ENCODE measurements at regions of chr7 and their contacts with region 1.

Region 1: DNA sequence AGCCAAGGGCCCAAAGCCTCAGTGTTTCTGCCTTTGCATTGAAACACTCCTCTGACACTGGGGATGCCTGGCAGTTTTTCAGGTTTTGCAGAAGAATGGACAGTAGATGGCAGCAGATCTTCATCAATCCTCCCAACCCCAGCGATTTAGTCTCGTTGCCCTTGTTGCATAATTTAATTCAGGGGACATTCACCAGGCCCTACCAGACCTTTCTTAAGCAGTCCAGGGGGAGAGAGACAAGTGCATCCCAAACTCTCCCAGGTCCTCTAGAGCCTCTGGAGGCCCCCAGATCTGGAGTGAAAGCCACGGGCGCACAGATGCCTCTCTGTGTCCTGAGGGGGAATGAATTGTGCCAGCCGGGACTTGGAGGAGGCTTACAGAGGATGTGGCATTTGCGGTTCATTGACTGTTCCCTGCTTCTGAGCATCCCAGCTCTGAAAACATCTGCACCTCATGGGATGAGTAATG is 29.6 kb downstream of the MINDY4 start:
- DNase-seq: peak; percentile 62 to 63
- H3K4me3 ChIP-seq: no peak overlapping the region
- H3K27ac ChIP-seq: peak overlapping the region in 1 of 3 donors; percentile 41
- H3K4me1 ChIP-seq: peaks cover 17 to 53% of the 10 kb centered on the region in 2 donors
- H3K27me3 ChIP-seq: no peaks in the 10 kb centered on the region
- CTCF ChIP-seq: peak; percentile 19 to 86 (median 70)
- POLR2A ChIP-seq: no peak

Region 2: DNA sequence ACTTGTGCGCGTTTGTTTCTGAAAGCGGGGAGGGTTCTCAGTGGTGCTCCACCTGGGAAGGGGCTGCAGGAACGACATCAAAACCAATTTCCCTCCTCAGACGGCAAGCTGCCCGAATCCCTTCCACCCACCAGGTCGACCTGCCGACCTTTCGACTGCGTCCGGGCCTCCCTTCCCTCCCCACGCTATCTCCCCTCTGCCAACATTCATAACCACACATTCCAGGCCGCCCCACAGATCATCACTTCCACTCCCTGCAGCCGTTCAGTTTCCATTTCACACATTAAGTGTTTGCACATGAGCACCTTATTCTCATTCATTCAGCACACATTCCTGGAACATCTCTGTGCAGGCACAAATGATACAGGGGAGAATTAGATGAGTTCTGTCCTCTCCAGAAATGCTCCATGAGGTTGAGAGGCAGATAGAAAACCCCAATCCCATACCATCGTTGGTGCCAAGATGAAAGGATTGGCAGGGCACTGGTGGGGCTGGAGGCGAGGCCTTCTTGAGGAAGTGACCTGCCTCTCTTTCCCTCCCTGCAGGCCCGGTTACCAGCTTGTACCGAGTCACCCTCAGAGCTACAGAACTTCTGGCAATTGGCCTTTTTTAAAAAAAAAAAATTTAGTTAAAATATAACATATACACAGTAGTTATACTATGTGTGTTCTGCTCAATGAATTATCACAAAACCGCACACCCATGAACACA is 40.4 kb after region 1 on chr7:
- intact Hi-C with region 1: no loop called
- DNase-seq: no peak
- H3K4me3 ChIP-seq: no peak overlapping the region
- H3K27ac ChIP-seq: peak overlapping the region in 1 of 3 donors; percentile 95
- H3K4me1 ChIP-seq: peaks cover 45 to 53% of the 10 kb centered on the region in 2 donors
- H3K27me3 ChIP-seq: no peaks in the 10 kb centered on the region
- CTCF ChIP-seq: no peak
- POLR2A ChIP-seq: no peak

Region 3: DNA sequence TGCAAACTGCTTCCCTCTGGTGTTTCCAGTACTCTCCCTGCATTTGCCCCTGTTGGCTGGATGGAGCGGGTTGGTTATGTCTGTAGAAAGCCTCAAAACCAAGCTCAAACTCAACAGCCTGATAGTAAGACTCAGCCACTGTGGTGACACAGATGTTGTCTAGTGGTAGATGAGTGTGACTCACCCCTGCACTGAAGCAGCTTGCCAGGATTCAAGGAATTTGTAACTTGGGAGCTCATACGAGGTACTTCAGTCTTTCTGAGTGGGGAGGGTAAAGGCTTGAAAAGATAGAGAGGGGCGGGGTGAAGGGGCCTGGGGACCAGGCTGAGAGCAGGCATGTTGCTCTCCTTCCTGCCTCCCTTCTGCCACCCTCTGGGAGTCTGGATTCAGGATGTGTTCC is 87.9 kb after region 1 on chr7:
- intact Hi-C with region 1: loop called (anchors 5 kb)
- DNase-seq: peak; percentile 84
- H3K4me3 ChIP-seq: no peak overlapping the region
- H3K27ac ChIP-seq: peak overlapping the region; percentile 28 to 79 (median 64)
- H3K4me1 ChIP-seq: peaks cover 33 to 61% of the 10 kb centered on the region in 2 donors
- H3K27me3 ChIP-seq: no peaks in the 10 kb centered on the region
- CTCF ChIP-seq: peak in 4 of 6 experiments; percentile 15 to 42 (median 29)
- POLR2A ChIP-seq: no peak

Region 4: DNA sequence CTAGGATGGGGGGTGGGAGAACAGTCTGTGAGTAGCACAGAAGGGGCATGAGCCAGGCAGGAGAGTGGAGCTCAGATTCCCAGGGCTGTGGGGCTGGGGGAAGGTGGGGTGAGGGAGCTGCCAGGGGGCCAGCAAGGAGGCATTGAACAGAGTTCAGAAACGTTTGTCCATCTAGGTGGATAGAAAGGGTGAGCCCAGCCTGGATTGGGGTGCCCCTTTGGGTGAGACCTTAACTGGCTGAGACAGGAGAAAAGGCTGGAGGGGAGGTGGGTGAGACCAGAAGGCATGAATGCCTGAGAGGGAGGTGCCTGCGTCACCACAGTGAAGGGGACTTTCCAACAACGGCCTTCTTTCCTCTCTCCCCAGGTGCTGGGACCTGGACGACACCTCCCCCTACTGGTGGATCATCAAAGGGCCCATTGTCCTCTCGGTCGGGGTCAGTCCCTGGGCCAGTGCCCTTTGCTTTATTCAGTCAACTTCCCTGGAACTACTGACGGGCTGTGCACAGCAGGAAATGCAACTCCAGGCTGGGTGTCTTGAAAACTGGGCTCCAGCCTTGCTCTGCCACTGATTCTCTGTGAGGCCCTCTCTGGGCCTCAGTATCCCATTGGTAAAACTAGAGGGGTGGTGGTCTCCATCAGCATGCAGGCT is 173.9 kb after region 1 on chr7:
- intact Hi-C with region 1: loop called (anchors 5 kb)
- DNase-seq: peak; percentile 57 to 59
- H3K4me3 ChIP-seq: no peak overlapping the region
- H3K27ac ChIP-seq: no peak overlapping the region
- H3K4me1 ChIP-seq: no peaks in the 10 kb centered on the region
- H3K27me3 ChIP-seq: no peaks in the 10 kb centered on the region
- CTCF ChIP-seq: peak; percentile 21 to 69 (median 51)
- POLR2A ChIP-seq: no peak

Region 5: DNA sequence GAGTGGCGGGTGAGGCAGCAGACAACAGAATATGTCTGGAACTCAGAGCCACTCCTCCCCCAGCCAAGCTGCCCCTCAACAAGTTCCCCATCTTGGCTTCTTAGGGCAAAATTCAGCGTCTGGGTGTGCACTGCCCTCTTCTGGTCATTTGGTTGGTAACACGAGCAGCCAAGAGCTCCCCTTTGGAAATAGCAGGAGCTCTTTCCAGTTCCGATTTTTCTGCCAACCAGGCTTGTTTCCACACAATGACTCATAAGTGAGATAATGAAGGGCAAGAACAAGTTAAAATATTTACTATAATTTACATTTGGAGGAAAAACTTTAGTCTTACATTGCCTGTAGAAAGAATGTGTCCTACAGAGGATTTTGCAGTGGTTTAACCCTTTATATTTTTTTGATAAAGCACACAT is 321.8 kb after region 1 on chr7:
- intact Hi-C with region 1: loop called (anchors 5 kb)
- DNase-seq: peak; percentile 55 to 61
- H3K4me3 ChIP-seq: no peak overlapping the region
- H3K27ac ChIP-seq: no peak overlapping the region
- H3K4me1 ChIP-seq: no peaks in the 10 kb centered on the region
- H3K27me3 ChIP-seq: no peaks in the 10 kb centered on the region
- CTCF ChIP-seq: peak; percentile 40 to 88 (median 76)
- POLR2A ChIP-seq: no peak